MCF 10A (cell line): ENCODE measurements at regions of chr12 and their contacts with region 1.

Region 1: DNA sequence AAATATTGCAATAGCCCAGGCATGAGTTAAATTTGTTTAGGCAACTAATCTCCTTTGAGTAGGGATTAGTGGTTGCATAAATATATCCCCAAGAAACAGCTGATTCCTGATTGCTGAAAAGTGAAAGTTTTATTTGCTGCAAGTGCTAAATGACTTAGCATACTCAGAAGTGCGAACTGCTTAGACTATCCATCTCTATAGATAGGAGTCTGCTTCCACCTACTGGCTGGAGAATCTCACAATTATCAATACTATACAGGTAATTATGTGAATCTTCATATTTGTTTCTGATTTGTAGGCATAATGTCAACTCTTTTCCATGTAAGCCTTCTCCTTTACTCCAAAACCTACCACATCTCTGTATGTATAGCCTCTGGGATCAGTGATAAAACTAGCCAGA is 11.9 kb upstream of the SLCO1B3 start:
- DNase-seq: peak; percentile 7
- H3K4me3 Mint-ChIP-seq: no peak overlapping the region
- H3K27ac Mint-ChIP-seq: no peak overlapping the region
- H3K4me1 Mint-ChIP-seq: no peaks in the 10 kb centered on the region
- H3K27me3 Mint-ChIP-seq: no peaks in the 10 kb centered on the region
- CTCF ChIP-seq: no peak

Region 2: GRCh38 chr12:20646239-20646827 is 152.2 kb before region 1 on chr12:
- CTCF ChIA-PET with region 1: interaction called, 4 read pairs
- POLR2A ChIA-PET with region 1: no interaction called
- intact Hi-C with region 1: loop called (anchors 1 kb)
- DNase-seq: peak; percentile 44
- H3K4me3 Mint-ChIP-seq: no peak overlapping the region
- H3K27ac Mint-ChIP-seq: no peak overlapping the region
- H3K4me1 Mint-ChIP-seq: no peaks in the 10 kb centered on the region
- H3K27me3 Mint-ChIP-seq: peaks cover 19% of the 10 kb centered on the region
- CTCF ChIP-seq: peak; percentile 46

Region 3: GRCh38 chr12:20822415-20822814 is 23.9 kb after region 1 on chr12:
- CTCF ChIA-PET with region 1: no interaction called
- POLR2A ChIA-PET with region 1: no interaction called
- intact Hi-C with region 1: no loop called
- DNase-seq: no peak
- H3K4me3 Mint-ChIP-seq: no peak overlapping the region
- H3K27ac Mint-ChIP-seq: no peak overlapping the region
- H3K4me1 Mint-ChIP-seq: no peaks in the 10 kb centered on the region
- H3K27me3 Mint-ChIP-seq: no peaks in the 10 kb centered on the region
- CTCF ChIP-seq: no peak

Region 4: GRCh38 chr12:20865873-20866272 is 67.3 kb after region 1 on chr12:
- CTCF ChIA-PET with region 1: no interaction called
- POLR2A ChIA-PET with region 1: no interaction called
- intact Hi-C with region 1: no loop called
- DNase-seq: peak; percentile 0
- H3K4me3 Mint-ChIP-seq: no peak overlapping the region
- H3K27ac Mint-ChIP-seq: no peak overlapping the region
- H3K4me1 Mint-ChIP-seq: no peaks in the 10 kb centered on the region
- H3K27me3 Mint-ChIP-seq: no peaks in the 10 kb centered on the region
- CTCF ChIP-seq: no peak